Natural killer cell (primary cell): ENCODE measurements at regions of chr7 and their contacts with region 1.

Region 1: DNA sequence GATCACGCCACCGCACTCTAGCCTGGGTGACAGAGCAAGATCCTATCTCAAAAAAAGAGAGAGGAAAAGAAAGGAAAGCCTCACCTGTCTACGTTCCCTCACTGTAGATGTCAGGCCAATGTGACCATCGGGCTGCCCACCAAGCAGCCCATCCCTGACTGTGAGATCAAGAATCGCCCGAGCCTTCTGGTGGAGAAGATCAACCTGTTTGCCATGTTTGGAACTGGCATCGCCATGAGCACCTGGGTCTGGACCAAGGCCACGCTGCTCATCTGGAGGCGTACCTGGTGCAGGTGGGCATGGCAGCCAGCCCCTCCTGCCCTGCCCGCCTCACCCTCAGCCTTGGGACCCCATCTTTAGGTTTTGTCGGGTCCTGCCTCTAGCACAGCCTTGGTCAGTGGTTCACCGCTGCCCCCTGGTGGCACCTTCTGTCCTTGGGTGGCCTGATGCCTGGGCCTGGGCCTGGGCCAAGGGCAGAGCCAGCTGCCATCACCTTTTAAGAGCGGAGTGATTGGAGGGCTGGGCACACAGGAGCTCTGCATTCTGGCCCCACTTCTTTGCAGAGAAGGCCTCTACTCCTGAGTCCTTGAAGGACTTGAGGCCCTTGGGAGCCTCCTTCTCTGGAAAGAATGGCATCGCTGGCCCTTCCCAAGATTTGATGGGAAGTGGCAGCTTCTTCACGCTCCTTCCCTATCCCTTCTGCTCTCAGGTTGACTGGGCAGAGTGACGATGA is 14.4 kb upstream of the AHCYL2 start:
- DNase-seq: peak; percentile 52 to 72
- ATAC-seq: peak; percentile 59 to 83 (median 73)
- H3K4me3 ChIP-seq: no peak overlapping the region
- H3K4me3 Mint-ChIP-seq: no peak overlapping the region
- H3K27ac ChIP-seq: no peak overlapping the region
- H3K27ac Mint-ChIP-seq: no peak overlapping the region
- H3K4me1 ChIP-seq: peaks cover 10% of the 10 kb centered on the region
- H3K4me1 Mint-ChIP-seq: no peaks in the 10 kb centered on the region
- H3K27me3 ChIP-seq: no peaks in the 10 kb centered on the region
- H3K27me3 Mint-ChIP-seq: peaks cover 6% of the 10 kb centered on the region in 2 donors
- CTCF ChIP-seq: peak; percentile 73

Region 2: DNA sequence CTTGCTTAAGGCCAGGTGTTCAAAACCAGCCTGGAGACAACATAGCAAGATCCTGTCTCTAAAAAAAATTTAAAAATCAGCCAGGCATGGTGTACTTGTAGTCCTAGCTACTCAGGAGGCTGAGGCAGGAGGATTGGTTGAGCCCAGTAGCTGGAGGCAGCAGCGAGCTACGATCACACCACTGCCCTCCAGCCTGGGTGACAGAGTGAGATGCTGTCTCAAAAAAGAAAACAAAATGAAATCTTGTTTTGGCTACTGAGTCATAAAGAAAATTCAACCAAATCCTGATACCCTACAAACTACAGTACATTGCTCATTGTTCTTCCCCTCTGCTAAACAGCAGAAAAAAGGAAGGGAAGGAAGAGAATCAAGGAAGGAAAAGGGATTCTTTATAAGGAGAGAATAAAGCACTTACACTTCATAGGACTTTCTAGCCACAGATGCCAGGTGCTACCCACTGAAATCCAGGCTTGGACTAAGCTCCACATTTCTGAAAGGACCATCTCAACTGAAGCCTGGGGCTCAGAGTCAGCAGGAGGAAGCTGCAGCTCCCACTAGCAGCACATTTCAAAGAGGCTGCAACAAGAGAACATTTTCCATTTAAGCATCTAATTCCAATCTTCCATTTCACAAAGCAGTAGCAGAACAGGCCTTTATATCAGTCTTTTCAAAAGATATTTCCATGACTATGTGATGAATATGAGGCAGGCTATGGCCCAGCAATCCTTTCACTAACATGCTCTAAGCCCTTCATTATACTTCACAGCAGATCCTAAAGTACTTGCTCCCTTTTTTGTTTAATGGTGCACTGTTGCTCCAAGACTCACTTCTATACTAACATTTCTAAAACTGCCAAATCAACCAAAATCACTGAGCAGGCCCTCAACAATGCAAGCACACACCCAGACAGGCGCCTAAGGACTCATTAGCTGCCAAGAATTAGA is 169.0 kb before region 1 on chr7:
- intact Hi-C with region 1: no loop called
- DNase-seq: no peak
- ATAC-seq: no peak
- H3K4me3 ChIP-seq: no peak overlapping the region
- H3K4me3 Mint-ChIP-seq: no peak overlapping the region
- H3K27ac ChIP-seq: no peak overlapping the region
- H3K27ac Mint-ChIP-seq: peak overlapping the region; percentile 23 to 46
- H3K4me1 ChIP-seq: peaks cover 9% of the 10 kb centered on the region
- H3K4me1 Mint-ChIP-seq: peaks cover 72 to 87% of the 10 kb centered on the region in 2 donors
- H3K27me3 ChIP-seq: no peaks in the 10 kb centered on the region
- H3K27me3 Mint-ChIP-seq: no peaks in the 10 kb centered on the region
- CTCF ChIP-seq: no peak

Region 3: GRCh38 chr7:129163875-129164544 is 46.4 kb before region 1 on chr7:
- intact Hi-C with region 1: loop called (anchors 2 kb)
- DNase-seq: peak in 1 of 2 donors; percentile 74
- ATAC-seq: peak in 2 of 3 donors; percentile 54 to 70
- H3K4me3 ChIP-seq: no peak overlapping the region
- H3K4me3 Mint-ChIP-seq: no peak overlapping the region
- H3K27ac ChIP-seq: no peak overlapping the region
- H3K27ac Mint-ChIP-seq: no peak overlapping the region
- H3K4me1 ChIP-seq: peaks cover 6% of the 10 kb centered on the region
- H3K4me1 Mint-ChIP-seq: no peaks in the 10 kb centered on the region
- H3K27me3 ChIP-seq: no peaks in the 10 kb centered on the region
- H3K27me3 Mint-ChIP-seq: no peaks in the 10 kb centered on the region
- CTCF ChIP-seq: peak; percentile 90